PC-3 (cell line): ENCODE measurements at regions of chr3 and their contacts with region 1.

Region 1: GRCh38 chr3:179474480-179474879 is 23.2 kb upstream of the GNB4 start:
- DNase-seq: no peak
- ATAC-seq: no peak
- H3K4me3 ChIP-seq: no peak overlapping the region
- H3K27ac ChIP-seq: no peak overlapping the region
- H3K4me1 ChIP-seq: no peaks in the 10 kb centered on the region
- H3K27me3 ChIP-seq: no peaks in the 10 kb centered on the region
- CTCF ChIP-seq: no peak

Region 2: DNA sequence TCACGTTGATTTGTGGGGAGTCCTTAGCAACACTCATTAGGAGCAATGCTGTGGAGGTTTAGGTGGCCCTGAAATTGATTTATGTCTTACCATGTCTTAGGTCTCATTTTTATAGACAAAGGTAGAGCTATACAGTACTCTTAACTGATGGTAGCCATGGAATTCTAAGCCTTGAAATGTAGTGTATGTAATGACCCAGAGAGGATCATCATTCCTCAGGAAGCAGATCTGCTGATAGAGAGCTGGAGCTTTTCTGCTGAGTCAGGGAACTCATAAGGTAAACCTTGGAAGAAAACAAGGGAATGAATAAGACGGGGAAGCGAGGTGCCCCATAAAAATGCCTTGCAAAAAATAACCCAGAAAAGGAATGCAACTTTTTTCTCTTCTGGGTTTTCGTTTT is 185.6 kb before region 1 on chr3:
- CTCF ChIA-PET with region 1: no interaction called
- POLR2A ChIA-PET with region 1: no interaction called
- intact Hi-C with region 1: no loop called
- DNase-seq: no peak
- ATAC-seq: no peak
- H3K4me3 ChIP-seq: no peak overlapping the region
- H3K27ac ChIP-seq: no peak overlapping the region
- H3K4me1 ChIP-seq: no peaks in the 10 kb centered on the region
- H3K27me3 ChIP-seq: no peaks in the 10 kb centered on the region
- CTCF ChIP-seq: no peak

Region 3: GRCh38 chr3:179486806-179487205 is 12.3 kb after region 1 on chr3:
- CTCF ChIA-PET with region 1: interaction called, 17 read pairs
- POLR2A ChIA-PET with region 1: no interaction called
- intact Hi-C with region 1: no loop called
- DNase-seq: no peak
- ATAC-seq: no peak
- H3K4me3 ChIP-seq: no peak overlapping the region
- H3K27ac ChIP-seq: no peak overlapping the region
- H3K4me1 ChIP-seq: no peaks in the 10 kb centered on the region
- H3K27me3 ChIP-seq: no peaks in the 10 kb centered on the region
- CTCF ChIP-seq: no peak